ENCODE measurements at regions of chr3 and their contacts with region 1.

Region 1: DNA sequence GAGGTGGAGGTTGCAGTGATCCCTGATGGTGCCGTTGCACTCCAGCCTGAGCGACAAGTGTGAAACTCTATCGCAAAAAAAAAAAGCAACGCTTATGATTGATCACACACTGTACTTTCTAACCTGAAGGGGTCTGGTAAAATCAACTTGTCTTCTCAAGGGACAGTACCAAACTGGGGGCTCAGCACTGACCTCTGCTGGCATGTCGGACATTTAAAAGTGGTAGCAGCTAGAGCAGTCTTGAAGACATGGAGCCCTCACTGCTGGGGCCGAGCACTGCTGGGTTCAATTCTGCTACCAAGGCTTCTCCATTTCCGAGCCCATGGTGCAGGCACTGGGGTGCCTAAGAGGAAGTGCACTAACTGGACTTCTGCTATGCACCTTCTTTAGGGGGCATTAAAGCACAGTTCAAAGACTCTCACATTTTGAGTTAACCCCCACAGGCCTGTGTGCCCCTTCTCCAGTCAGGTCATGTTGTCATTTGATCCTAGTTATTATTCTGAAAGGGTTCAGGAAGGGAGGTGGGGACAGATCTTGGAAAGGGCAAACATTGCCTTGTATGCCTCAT is 26.4 kb upstream of the LAMP3 start:
- DNase-seq: peak; percentile 60
- CTCF ChIP-seq: peak; percentile 45

Region 2: GRCh38 chr3:183031826-183032225 is 157.2 kb before region 1 on chr3:
- CTCF ChIA-PET with region 1: no interaction called
- POLR2A ChIA-PET with region 1: no interaction called
- DNase-seq: no peak
- CTCF ChIP-seq: no peak

Region 3: DNA sequence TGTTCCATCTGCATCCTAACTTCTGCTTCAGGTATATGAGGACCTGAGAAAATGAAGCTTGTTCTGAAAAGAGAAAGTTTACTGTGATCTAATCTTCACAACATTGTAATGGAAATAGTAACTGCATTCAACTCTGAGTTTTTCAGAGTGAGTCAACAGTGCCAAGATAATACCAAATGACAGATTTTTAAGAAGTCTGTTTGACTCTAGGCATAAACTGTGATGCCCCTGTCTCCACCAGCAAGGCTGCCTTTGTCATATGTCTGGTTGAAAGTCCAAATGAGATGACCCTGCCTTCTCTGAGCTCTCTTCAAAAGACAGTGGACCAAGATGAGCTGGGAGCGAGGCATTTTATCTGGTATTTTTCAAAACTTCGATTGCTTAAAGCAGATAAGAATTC is 19.3 kb after region 1 on chr3:
- CTCF ChIA-PET with region 1: interaction called, 10 read pairs
- POLR2A ChIA-PET with region 1: no interaction called
- DNase-seq: no peak
- CTCF ChIP-seq: no peak

Region 4: GRCh38 chr3:183680061-183680460 is 491.1 kb after region 1 on chr3:
- CTCF ChIA-PET with region 1: no interaction called
- POLR2A ChIA-PET with region 1: no interaction called
- DNase-seq: no peak
- CTCF ChIP-seq: no peak

Measured in GM10248 (cell line).